ENCODE measurements at regions of chr17 and their contacts with region 1.

Region 1: DNA sequence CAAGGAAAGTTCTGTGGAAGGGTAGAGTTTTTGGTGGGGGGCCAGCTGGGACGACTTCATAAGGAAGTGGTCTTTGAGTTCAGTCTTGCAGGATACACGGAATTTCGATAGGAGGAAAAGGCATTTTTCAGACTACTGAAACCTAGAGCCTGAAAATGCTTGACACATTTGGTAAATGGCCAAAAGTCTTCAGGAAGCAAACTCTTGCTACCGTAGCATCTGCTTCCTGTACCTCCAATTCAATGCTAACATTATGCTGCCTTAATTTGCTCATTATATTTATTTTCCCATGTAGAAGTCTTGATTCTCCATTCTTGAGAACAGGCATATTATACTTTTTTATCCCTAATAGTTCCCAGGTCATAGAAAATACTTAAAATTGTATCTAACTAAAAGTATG is 129.3 kb upstream of the MED13 start:
- DNase-seq: no peak
- H3K4me3 ChIP-seq: no peak overlapping the region
- H3K27ac ChIP-seq: no peak overlapping the region
- H3K4me1 ChIP-seq: no peaks in the 10 kb centered on the region
- H3K27me3 ChIP-seq: no peaks in the 10 kb centered on the region
- CTCF ChIP-seq: no peak
- EP300 ChIP-seq: no peak
- POLR2A ChIP-seq: no peak

Region 2: DNA sequence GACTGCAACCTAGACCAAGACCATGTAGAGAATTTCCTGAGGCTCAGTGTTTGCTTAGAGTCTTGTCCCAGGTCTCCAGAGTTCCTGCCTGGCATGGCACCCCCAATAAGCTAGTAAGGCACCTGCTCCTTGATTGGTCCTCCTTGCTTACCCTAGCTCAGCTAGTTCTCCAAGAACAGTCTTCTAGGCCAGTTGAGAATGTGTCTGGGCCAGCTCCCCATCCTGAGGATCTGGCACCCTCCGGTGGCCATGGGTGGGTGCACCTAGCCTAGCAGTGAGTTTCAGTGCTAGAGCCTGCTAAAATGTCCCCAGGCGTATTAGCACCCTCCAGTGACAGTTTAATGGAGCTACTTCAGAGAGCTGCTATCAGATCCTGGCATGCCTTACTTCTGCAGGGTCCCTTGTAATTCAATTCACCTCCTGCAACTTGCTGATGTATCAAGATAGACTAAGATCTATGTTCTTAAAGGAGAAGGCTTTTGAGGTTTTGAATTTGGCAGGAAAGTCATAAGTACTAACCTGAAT is 85.0 kb before region 1 on chr17:
- intact Hi-C with region 1: no loop called
- DNase-seq: no peak
- H3K4me3 ChIP-seq: no peak overlapping the region
- H3K27ac ChIP-seq: no peak overlapping the region
- H3K4me1 ChIP-seq: no peaks in the 10 kb centered on the region
- H3K27me3 ChIP-seq: peaks cover 0 to 5% (median 0%) of the 10 kb centered on the region in 4 donors
- CTCF ChIP-seq: peak in 1 of 3 experiments; percentile 10
- EP300 ChIP-seq: no peak
- POLR2A ChIP-seq: no peak

Region 3: GRCh38 chr17:62206543-62206942 is 12.1 kb after region 1 on chr17:
- intact Hi-C with region 1: loop called (anchors 1 kb)
- DNase-seq: peak; percentile 57
- H3K4me3 ChIP-seq: no peak overlapping the region
- H3K27ac ChIP-seq: no peak overlapping the region
- H3K4me1 ChIP-seq: no peaks in the 10 kb centered on the region
- H3K27me3 ChIP-seq: no peaks in the 10 kb centered on the region
- CTCF ChIP-seq: no peak
- EP300 ChIP-seq: no peak
- POLR2A ChIP-seq: no peak